CD4-positive, alpha-beta memory T cell (primary cell): ENCODE measurements at regions of chr12 and their contacts with region 1.

Region 1: DNA sequence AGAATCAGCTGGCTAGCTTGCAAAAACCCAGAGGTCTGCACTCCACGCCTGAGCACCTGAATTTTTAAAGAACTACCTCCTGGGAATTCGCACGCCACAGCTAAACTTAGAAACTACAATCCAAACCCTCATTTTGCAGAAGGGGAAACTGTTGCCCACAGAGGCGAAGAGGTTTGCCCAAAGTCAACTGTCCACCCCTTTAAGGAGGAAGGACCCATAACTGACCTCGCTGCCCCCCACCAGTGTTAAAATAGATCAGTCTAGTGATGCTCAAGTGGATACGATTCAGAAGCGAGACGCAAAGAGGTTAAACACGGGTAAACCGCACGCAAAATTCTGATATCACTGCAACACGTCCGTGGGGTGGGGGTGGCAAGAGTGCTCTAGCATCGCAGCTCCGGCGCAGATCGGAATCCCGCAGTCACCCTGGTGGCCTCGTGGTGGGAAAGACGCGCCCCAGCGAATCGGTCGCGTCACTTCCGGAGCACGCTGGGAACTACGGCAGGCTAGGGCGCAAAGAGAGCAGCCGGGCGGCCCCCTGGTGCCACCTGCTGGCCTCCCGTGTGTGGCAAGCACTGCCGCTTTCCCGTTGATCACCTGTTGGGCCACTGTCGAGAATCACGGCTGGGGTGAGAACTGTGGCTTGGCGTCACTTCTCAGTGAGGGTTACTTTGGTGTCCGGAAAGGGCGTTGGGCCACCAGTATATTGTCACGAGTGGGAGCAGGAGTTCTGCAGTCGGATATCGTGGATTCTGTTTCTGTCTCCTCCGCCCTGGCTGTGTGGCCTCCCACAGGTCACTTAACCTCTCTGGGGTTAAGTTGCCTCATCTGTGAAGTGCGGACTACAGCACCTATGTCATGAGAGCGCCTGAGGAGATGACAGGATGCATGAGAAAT is at the start of gene ALKBH2:
- DNase-seq: peak; percentile 93 to 98 (median 95)
- H3K4me3 ChIP-seq: peak within 1 kb of the TSS; percentile 62 to 75
- H3K4me3 Mint-ChIP-seq: peak within 1 kb of the TSS; percentile 84 to 91 (median 86)
- H3K27ac ChIP-seq: peak within 1 kb of the TSS; percentile 60
- H3K27ac Mint-ChIP-seq: peak within 1 kb of the TSS; percentile 86 to 97 (median 95)
- H3K4me1 ChIP-seq: peaks cover 27% of the 10 kb centered on the region
- H3K4me1 Mint-ChIP-seq: peaks cover 21 to 56% (median 34%) of the 10 kb centered on the region in 4 donors
- H3K27me3 ChIP-seq: no peaks in the 10 kb centered on the region
- H3K27me3 Mint-ChIP-seq: no peaks in the 10 kb centered on the region
- total RNA-seq, gene ALKBH2: 12.9 to 14.4 TPM

Region 2: DNA sequence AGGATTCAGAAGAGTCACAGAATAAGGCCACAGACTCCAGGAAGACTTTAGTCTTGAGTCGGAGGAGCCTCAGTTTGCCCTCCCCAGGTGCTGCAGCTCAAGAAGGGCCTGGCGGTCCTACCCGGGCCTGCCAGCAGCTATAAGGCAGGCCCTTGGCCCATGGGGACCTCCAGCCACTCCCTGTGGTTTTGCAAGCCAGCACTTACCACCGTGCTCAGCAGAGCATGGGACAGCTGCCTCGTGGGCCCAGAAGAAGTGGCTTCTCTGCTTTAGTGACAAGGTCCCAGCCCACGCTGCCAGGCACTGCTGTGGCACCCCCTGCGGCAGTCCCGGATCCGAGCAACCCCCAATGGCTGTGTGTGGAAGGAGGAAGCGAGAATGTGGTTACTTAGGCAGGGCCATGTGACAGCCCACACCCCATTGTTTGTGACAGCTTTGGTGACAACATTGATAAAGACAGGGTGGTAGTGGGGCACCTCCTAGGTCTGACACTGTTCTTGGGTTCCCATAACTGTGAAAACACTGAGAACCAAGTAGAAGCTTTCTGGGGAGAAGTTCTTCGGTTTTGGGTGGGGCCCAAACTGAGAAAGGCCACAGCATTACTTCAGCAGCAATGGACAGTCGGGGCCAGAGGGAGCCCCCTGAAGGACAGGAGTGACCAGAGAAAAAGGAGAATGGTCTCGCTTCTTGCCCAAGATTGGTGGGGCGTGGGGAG is 459.6 kb before region 1 on chr12 and contains the start of gene SELPLG:
- CTCF ChIA-PET with region 1: no interaction called
- POLR2A ChIA-PET with region 1: no interaction called
- intact Hi-C with region 1: loop called (anchors 10 kb)
- DNase-seq: peak; percentile 91 to 97 (median 94)
- H3K4me3 ChIP-seq: peak within 1 kb of the TSS; percentile 92 to 95
- H3K4me3 Mint-ChIP-seq: peak within 1 kb of the TSS; percentile 94 to 100 (median 99)
- H3K27ac ChIP-seq: peak within 1 kb of the TSS; percentile 92
- H3K27ac Mint-ChIP-seq: peak within 1 kb of the TSS; percentile 99 to 100 (median 100)
- H3K4me1 ChIP-seq: peaks cover 65% of the 10 kb centered on the region
- H3K4me1 Mint-ChIP-seq: peaks cover 40 to 84% (median 54%) of the 10 kb centered on the region in 4 donors
- H3K27me3 ChIP-seq: no peaks in the 10 kb centered on the region
- H3K27me3 Mint-ChIP-seq: no peaks in the 10 kb centered on the region
- total RNA-seq, gene SELPLG: 175 to 176 TPM

Region 3: GRCh38 chr12:108950991-108951739 is 142.1 kb before region 1 on chr12:
- CTCF ChIA-PET with region 1: interaction called, 10 read pairs
- POLR2A ChIA-PET with region 1: no interaction called
- intact Hi-C with region 1: loop called (anchors 1 kb)
- DNase-seq: peak; percentile 68 to 76 (median 71)
- H3K4me3 ChIP-seq: no peak overlapping the region
- H3K4me3 Mint-ChIP-seq: peak overlapping the region in 2 of 8 donors; percentile 4 to 34
- H3K27ac ChIP-seq: no peak overlapping the region
- H3K27ac Mint-ChIP-seq: no peak overlapping the region
- H3K4me1 ChIP-seq: peaks cover 7% of the 10 kb centered on the region
- H3K4me1 Mint-ChIP-seq: peaks cover 0 to 5% (median 1%) of the 10 kb centered on the region in 4 donors
- H3K27me3 ChIP-seq: no peaks in the 10 kb centered on the region
- H3K27me3 Mint-ChIP-seq: peaks cover 10 to 13% of the 10 kb centered on the region in 2 donors

Region 4: DNA sequence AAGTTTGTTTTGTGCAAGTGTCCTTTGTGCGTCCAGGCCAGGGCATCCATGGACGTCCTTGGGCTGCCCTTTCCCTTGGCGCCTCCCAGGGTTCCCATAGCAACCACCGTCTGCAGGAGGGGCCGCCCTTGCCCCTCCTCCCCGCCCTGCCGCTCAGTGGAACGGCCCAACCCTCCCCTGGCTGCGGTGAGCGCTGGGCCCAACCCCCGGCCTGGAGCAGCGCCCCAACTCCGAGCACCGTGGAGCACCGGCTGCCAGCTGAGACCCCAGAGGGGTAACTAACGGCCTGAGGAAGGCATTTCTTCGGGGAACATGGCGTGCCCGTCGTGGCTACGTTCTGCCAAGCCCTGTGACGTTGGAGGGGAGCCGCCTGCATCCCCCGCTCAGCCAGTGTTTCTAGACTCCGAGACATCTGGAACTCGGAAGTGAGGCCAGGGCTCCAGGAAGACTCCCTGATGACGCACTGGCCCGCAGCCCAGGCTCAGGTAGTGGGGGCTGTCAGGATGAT is 17.8 kb after region 1 on chr12:
- CTCF ChIA-PET with region 1: interaction called, 33 read pairs
- POLR2A ChIA-PET with region 1: interaction called, 7 read pairs
- intact Hi-C with region 1: loop called (anchors 1 kb)
- DNase-seq: peak; percentile 25 to 74 (median 45)
- H3K4me3 ChIP-seq: peak overlapping the region; percentile 9 to 53
- H3K4me3 Mint-ChIP-seq: peak overlapping the region; percentile 73 to 88 (median 82)
- H3K27ac ChIP-seq: peak overlapping the region; percentile 68
- H3K27ac Mint-ChIP-seq: peak overlapping the region in 6 of 7 donors; percentile 73 to 91 (median 84)
- H3K4me1 ChIP-seq: peaks cover 7% of the 10 kb centered on the region
- H3K4me1 Mint-ChIP-seq: peaks cover 9 to 37% (median 20%) of the 10 kb centered on the region in 4 donors
- H3K27me3 ChIP-seq: no peaks in the 10 kb centered on the region
- H3K27me3 Mint-ChIP-seq: no peaks in the 10 kb centered on the region

Region 5: GRCh38 chr12:109147954-109148353 is 54.7 kb after region 1 on chr12:
- CTCF ChIA-PET with region 1: no interaction called
- POLR2A ChIA-PET with region 1: no interaction called
- intact Hi-C with region 1: no loop called
- DNase-seq: no peak
- H3K4me3 ChIP-seq: no peak overlapping the region
- H3K4me3 Mint-ChIP-seq: no peak overlapping the region
- H3K27ac ChIP-seq: no peak overlapping the region
- H3K27ac Mint-ChIP-seq: no peak overlapping the region
- H3K4me1 ChIP-seq: no peaks in the 10 kb centered on the region
- H3K4me1 Mint-ChIP-seq: peaks cover under 1 to 4% (median 3%) of the 10 kb centered on the region in 4 donors
- H3K27me3 ChIP-seq: no peaks in the 10 kb centered on the region
- H3K27me3 Mint-ChIP-seq: peaks cover 0 to 1% of the 10 kb centered on the region in 2 donors